Caco-2 (cell line): ENCODE measurements at regions of chr11 and their contacts with region 1.

Region 1: GRCh38 chr11:615504-616319 is at the start of gene IRF7:
- DNase-seq: peak; percentile 94 to 95
- H3K4me3 ChIP-seq: peak within 1 kb of the TSS; percentile 90
- H3K4me3 Mint-ChIP-seq: peak within 1 kb of the TSS; percentile 81
- H3K27ac Mint-ChIP-seq: peak within 1 kb of the TSS; percentile 89
- H3K4me1 ChIP-seq: peaks cover 27% of the 10 kb centered on the region
- H3K4me1 Mint-ChIP-seq: peaks cover 5% of the 10 kb centered on the region
- H3K27me3 ChIP-seq: no peaks in the 10 kb centered on the region
- H3K27me3 Mint-ChIP-seq: no peaks in the 10 kb centered on the region
- CTCF ChIP-seq: no peak
- total RNA-seq, gene IRF7: 27.2 and 31.2 TPM in 2 replicates

Region 2: GRCh38 chr11:568306-569157 is 47.2 kb before region 1 on chr11:
- CTCF ChIA-PET with region 1: no interaction called
- POLR2A ChIA-PET with region 1: interaction called, 5 read pairs
- intact Hi-C with region 1: loop called (anchors 5 kb)
- DNase-seq: peak; percentile 95 to 99
- H3K4me3 ChIP-seq: peak overlapping the region; percentile 99
- H3K4me3 Mint-ChIP-seq: peak overlapping the region; percentile 74
- H3K27ac Mint-ChIP-seq: no peak overlapping the region
- H3K4me1 ChIP-seq: peaks cover 54% of the 10 kb centered on the region
- H3K4me1 Mint-ChIP-seq: peaks cover 6% of the 10 kb centered on the region
- H3K27me3 ChIP-seq: no peaks in the 10 kb centered on the region
- H3K27me3 Mint-ChIP-seq: no peaks in the 10 kb centered on the region
- CTCF ChIP-seq: no peak

Region 3: DNA sequence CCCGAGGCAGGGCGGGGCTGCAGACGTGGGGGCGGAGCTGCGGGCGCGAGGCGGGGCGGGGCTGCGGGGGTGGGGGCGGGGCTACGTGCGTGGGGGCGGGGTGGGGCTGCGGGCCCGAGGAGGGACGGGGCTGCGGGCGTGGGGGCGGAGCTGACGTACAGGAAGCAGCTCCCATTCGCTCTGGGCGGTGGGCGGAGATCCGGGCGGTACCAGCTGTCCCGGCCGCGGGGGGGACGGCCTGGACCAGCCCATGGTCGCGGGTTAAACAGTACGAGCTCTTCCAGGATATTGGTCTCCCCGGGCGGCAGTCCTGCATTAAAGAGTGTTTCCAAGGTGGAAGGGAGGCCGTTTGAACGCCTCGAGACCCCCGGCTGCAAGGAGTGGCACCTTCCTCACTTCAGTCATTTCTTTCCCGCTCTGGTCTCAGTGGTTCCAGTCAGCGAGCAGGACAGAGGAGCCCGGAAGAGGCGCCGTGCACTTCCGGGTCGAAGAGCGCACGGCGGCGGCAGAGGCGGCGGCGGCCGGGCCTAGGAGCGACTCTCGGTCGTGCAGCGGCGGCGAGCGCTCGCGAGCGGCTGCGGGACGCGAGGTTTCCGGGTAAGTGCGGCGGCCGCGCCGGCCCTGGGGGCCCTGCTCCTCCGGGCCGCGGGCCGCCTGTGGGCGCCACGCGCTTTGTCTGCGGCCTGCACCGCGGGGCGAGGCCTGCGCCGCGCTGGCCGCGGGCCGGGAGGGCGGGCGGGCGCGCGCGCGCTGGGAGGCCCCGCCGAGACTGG is 39.5 kb before region 1 on chr11 and contains the start of gene PHRF1:
- CTCF ChIA-PET with region 1: no interaction called
- POLR2A ChIA-PET with region 1: interaction called, 5 read pairs
- intact Hi-C with region 1: loop called (anchors 5 kb)
- DNase-seq: peak; percentile 95 to 97
- H3K4me3 ChIP-seq: peak within 1 kb of the TSS; percentile 100
- H3K4me3 Mint-ChIP-seq: peak within 1 kb of the TSS; percentile 78
- H3K27ac Mint-ChIP-seq: peak within 1 kb of the TSS; percentile 97
- H3K4me1 ChIP-seq: peaks cover 36% of the 10 kb centered on the region
- H3K4me1 Mint-ChIP-seq: peaks cover 22% of the 10 kb centered on the region
- H3K27me3 ChIP-seq: no peaks in the 10 kb centered on the region
- H3K27me3 Mint-ChIP-seq: no peaks in the 10 kb centered on the region
- CTCF ChIP-seq: no peak
- total RNA-seq, gene PHRF1: 43.9 and 46.8 TPM in 2 replicates

Region 4: DNA sequence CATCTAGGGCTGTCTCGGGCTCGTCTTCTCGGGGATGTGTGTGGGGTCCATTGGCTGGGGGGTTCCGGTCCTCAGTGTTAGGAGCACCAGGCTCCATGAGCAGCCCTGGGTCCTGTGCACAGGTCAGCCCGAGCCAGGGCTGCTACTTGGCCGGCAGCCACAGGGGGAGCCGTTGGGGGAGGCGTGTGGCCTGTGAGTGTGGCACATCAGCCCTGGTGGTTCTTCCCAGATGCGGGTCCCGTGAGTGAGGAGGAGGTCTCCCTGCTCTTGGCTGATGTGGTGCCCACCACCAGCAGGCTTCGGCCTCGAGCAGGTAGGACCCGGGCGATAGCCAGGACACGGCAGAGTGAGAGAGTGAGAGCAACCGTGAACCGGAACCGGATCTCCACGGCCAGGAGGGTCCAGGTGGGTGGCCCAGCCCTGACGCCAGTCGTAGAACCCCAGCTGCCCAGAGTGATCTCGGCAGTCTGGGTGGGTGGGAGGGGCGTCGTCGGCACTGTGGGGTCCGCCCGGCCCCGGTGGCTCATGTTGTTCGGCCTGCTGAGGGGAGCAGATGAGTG is 18.5 kb before region 1 on chr11:
- CTCF ChIA-PET with region 1: no interaction called
- POLR2A ChIA-PET with region 1: no interaction called
- intact Hi-C with region 1: no loop called
- DNase-seq: peak in 1 of 2 experiments; percentile 36
- H3K4me3 ChIP-seq: no peak overlapping the region
- H3K4me3 Mint-ChIP-seq: no peak overlapping the region
- H3K27ac Mint-ChIP-seq: peak overlapping the region; percentile 42
- H3K4me1 ChIP-seq: no peaks in the 10 kb centered on the region
- H3K4me1 Mint-ChIP-seq: no peaks in the 10 kb centered on the region
- H3K27me3 ChIP-seq: no peaks in the 10 kb centered on the region
- H3K27me3 Mint-ChIP-seq: no peaks in the 10 kb centered on the region
- CTCF ChIP-seq: peak in 1 of 2 experiments; percentile 26